ENCODE measurements at regions of chr7 and their contacts with region 1.

Region 1: DNA sequence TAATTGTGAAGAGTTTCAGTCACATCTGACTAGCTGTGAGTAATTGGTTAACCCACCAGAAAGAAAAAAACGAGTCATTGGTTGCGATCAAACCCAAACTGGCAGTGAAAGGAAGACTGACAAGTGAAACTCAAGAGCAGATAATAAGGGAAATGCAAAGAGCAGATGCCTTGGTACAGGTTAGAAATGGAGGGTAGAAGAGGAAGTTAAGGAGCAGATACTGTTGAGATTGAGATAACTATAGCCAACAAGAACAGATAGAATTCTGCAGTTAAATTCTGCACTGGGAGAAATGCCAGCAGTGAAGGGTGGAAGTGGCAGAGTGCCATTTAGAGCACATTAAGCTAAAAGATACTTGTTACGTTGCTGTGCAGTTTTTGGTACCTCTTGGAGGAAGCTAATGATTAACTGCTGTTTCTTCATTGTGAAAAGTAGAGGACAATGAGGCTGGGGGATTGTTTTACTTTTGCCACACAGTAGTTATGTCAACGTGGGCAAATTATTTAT is 65.8 kb downstream of the CDK13 start:
- DNase-seq: no peak
- H3K4me3 Mint-ChIP-seq: no peak overlapping the region
- H3K27ac Mint-ChIP-seq: peak overlapping the region; percentile 1
- H3K4me1 Mint-ChIP-seq: peaks cover 17% of the 10 kb centered on the region
- H3K27me3 Mint-ChIP-seq: no peaks in the 10 kb centered on the region

Region 2: DNA sequence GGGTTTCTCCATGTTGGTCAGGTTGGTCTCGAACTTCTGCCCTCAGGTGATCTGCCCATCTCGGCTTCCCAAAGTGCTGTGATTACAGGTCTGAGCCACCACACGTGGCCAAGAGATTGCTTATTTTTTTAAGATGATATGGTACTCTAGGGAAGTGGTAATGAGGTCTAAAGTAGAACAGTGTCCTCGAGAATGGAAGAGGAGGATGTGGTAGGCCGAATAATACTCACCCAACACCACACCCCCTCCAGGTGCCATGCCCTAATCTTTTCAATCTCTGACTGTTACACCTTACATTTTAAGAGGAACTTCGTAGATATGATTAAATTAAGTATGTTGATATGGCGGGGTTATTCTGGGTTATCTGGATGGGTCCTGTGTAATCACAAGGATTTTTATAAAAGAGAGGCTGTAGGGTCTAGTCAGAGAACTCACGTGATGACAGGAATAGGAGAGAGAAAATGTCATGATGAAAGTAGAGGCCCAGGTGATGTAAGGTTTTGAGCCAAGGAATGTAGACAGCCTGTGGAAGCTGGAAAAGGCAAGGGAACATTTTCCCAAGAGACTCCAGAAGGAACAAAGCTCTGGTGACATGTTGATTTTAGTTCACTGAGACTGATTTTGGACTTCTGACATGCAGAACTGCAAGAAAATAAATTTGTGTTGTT is 36.3 kb before region 1 on chr7:
- intact Hi-C with region 1: loop called (anchors 5 kb)
- DNase-seq: no peak
- H3K4me3 Mint-ChIP-seq: no peak overlapping the region
- H3K27ac Mint-ChIP-seq: no peak overlapping the region
- H3K4me1 Mint-ChIP-seq: peaks cover 6% of the 10 kb centered on the region
- H3K27me3 Mint-ChIP-seq: no peaks in the 10 kb centered on the region

Region 3: DNA sequence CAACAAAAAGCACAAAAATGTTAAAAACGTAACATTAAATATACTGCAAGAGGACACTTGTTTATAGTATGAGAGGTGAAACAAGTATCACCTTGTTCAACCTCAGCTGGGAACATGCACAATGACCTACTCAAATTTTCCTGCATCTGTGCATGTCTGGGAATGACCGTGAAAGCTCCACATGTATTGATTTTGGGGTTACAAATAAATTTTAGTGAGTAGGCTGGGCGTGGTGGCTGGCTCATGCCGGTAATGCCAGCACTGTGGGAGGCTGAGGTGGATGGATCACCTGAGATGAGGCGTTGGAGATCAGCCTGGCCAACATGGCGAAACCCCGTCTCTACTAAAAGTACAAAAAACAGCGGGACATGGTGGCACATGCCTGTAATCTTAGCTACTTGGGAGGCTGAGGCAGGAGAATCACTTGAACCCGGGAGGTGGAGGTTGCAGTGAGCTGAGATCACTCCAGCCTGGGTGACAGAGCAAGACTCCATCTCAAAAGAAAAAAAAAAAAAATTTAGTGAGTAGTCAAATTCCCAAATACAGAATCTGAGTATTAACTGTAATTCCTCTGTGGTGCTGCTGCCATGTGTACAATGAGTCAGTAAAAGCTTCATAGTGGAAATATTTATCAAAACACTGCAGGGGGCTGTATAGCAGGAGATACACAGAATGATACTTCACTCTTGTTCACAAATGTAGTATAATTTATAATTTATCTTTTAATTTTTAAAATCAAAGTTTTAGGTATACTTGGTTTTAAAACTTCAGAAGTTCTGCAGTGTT is 160.1 kb after region 1 on chr7:
- intact Hi-C with region 1: no loop called
- DNase-seq: no peak
- H3K4me3 Mint-ChIP-seq: no peak overlapping the region
- H3K27ac Mint-ChIP-seq: no peak overlapping the region
- H3K4me1 Mint-ChIP-seq: no peaks in the 10 kb centered on the region
- H3K27me3 Mint-ChIP-seq: no peaks in the 10 kb centered on the region